Brain microvascular endothelial cell (primary cell): ENCODE measurements at regions of chr3 and their contacts with region 1.

Region 1: DNA sequence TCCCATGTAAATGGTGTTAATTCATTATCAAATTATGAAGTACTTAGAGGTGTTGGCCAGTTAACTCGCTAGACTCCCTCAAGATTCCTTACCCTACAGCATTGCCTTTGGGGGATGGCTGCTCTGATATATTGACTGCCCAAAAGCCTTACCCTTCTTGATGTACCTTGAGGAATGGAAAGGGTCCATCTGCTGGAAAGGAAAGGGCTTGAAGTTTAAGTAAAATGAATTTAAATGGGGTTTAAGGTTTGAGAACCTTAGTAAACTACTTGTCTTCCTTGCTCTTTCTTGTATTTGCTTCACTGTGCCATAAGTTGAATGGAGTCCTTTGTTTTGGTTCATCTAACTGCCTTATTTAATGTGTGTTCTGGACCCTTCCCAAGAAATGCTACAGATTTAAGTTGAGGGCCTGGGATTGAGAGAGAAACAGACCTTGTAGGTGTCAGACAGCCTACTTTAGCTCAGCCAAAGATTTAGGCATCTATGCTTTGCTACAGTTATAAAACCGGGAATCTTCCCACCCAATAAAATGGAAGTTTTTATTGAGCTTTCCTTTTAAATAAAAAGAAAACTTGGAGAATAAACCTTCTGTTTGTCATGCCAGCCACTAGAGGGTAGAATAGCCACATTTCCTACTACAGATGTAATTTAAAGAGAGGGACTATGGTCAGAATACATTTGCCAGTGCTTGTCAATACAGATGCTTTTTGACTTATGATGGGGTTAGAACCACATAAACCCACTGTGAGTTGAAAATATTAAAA is 25.3 kb downstream of the CMSS1 start:
- DNase-seq: no peak
- H3K4me3 ChIP-seq: no peak overlapping the region
- H3K27ac ChIP-seq: no peak overlapping the region
- H3K27me3 ChIP-seq: no peaks in the 10 kb centered on the region
- CTCF ChIP-seq: peak; percentile 50

Region 2: DNA sequence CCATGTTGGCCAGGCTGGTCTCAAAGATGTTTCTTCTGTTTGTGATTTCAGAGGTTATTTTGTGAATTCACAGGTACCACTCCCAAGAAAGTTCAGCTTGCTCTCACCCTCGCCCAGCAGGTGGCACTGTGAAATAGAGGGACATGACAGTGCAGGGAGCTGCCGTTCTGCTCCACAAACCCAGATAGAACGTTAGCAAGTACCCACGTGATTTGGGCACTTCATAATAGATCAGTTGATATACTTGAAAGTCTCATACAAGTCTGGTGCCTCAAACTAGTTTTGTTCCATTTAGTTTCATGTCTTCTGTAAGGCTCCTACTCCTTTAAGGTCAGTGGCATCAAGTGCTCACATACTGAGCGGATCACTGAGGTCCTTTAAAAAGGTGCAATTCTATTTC is 225.8 kb after region 1 on chr3:
- in situ Hi-C with region 1: loop called (anchors 25 kb)
- DNase-seq: peak; percentile 61
- H3K4me3 ChIP-seq: no peak overlapping the region
- H3K27ac ChIP-seq: no peak overlapping the region
- H3K27me3 ChIP-seq: no peaks in the 10 kb centered on the region
- CTCF ChIP-seq: peak; percentile 87

Region 3: GRCh38 chr3:100260685-100261484 is 417.9 kb after region 1 on chr3 and contains the start of gene TBC1D23:
- in situ Hi-C with region 1: loop called (anchors 25 kb)
- DNase-seq: peak; percentile 99
- H3K4me3 ChIP-seq: peak within 1 kb of the TSS; percentile 99
- H3K27ac ChIP-seq: peak within 1 kb of the TSS; percentile 97
- H3K27me3 ChIP-seq: no peaks in the 10 kb centered on the region
- CTCF ChIP-seq: peak; percentile 9